ENCODE measurements at regions of chr12 and their contacts with region 1.

Region 1: GRCh38 chr12:1661553-1662335 is 29.1 kb upstream of the ADIPOR2 start:
- DNase-seq: peak; percentile 27
- H3K4me3 ChIP-seq: peak overlapping the region; percentile 51
- CTCF ChIP-seq: no peak

Region 2: DNA sequence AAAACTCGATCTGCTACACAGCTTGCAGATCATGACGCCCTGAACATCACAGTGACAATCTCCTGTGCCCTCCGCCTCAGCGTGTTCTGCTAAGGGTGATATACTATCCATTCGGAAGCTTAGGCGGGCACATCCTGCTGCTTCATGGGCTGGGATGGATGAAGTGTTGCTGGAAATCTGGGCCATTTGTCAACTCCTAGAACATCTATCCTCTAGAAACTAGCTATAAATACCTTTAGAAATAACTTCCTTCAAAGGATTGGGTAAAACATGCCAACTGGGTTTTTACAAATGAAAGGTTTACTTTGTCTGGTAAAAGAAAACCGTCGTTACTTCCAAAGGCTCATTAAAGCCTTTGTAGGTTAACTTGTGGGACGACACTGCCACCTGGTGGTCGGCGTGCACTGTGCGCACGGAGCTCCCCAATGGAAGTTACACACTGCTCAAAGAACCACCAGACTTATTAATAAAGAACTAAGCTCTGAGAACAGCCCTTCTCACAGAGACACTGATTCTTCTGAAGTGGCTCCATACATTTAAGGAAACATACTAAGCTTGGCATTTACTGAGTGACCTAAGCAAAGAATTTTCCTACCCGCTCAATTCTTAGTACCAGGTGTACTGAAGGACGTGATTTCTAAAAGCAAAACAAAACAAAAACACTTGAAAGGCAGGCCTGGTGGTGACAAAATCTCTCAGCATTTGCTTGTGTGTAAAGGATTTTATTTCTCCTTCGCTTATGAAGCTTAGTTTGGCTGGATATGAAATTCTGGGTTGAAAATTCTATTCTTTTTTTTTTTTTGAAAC is 278.3 kb after region 1 on chr12:
- in situ Hi-C with region 1: no loop called
- DNase-seq: peak; percentile 76
- H3K4me3 ChIP-seq: no peak overlapping the region
- CTCF ChIP-seq: peak; percentile 91

Region 3: DNA sequence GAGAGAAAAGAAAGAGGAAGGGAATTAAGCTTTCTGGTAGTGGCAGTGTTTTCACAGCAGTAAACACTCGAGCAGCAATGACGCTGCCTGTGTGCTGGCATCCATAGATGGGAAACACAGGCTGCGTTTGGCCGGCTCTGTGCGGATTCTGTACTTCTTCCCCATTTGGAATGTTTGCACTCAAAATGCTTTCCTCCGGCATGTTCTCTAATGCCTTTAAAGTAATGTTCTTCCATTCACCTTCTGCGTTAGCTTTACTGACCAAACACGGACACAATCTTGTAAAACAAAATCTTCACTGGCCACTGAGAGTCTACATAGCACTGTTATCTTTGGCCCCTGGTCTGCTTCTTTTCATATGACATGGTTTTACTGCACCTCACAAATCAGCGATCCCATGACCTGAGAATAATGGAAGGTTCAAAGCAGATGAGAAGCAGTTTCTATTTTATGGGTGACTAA is 311.1 kb after region 1 on chr12:
- in situ Hi-C with region 1: loop called (anchors 25 kb)
- DNase-seq: no peak
- H3K4me3 ChIP-seq: no peak overlapping the region
- CTCF ChIP-seq: no peak

Measured in astrocyte of the cerebellum (primary cell).